Activated CD8-positive, alpha-beta memory T cell treated with anti-CD3 and anti-CD28 coated beads, Interleukin-2, amount 10 ng/mL, durations not matched to agents 7 days and 5 days (primary cell): ENCODE measurements at regions of chr1 and their contacts with region 1.

Region 1: DNA sequence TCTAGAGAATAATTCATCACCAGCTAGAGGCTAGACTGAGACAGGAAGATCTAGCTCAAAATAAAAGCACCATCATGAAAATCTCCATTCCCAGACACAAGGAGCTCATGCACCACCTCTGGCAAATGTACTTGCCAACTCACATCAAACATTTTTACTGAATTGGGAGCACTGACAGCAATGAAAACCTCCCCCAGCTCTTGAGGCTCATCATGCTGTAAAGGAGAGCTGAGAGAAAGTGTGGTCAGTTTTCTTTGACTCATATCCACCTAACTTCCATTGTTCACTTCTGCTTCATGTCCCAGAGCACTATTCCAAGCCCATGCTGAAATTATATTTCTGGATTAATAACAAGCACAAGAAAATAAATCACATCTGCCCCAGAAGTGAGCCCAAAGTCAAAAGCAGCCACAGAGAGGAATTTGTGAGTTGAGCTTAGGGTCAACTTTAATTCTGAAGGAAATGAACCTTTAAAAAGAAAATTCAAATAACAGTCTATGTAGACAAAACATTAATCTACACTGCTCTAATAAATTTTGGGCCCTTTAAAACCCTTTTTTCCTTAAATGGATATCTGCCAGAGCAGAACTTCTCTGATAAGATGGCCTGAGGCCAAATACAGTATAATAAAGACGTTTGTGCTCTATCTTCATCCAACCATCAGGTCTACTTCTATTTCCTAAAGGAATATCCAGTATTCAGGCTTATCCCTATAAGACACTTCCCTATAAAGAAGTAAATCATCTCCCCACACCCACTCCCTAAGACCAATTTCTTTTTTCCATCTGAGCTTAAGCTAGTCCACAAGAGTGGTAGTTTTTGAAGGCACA is 85.9 kb upstream of the ADAM30 start:
- DNase-seq: no peak
- ATAC-seq: no peak
- H3K4me3 Mint-ChIP-seq: no peak overlapping the region
- H3K27ac Mint-ChIP-seq: no peak overlapping the region
- H3K4me1 Mint-ChIP-seq: peaks cover 26% of the 10 kb centered on the region
- H3K27me3 Mint-ChIP-seq: no peaks in the 10 kb centered on the region

Region 2: DNA sequence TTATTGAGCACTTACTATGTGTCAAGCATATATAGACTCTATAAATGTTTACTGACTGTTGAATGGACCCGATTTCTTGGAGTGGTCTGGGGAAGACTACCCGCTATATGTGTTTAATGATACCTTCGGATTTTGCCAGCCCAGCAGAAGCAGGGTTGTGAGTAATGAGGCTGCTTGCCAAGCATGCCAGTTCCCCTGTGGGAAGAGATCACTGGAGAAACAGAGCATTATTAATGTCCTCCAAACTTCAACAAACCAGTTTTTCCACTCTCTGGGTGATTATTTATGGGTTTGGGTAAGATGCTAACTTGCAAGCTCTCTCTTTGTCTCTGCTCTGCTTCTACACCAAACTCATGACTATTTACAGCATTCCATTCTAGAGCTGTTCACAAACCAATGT is 295.6 kb before region 1 on chr1:
- CTCF ChIA-PET with region 1: no interaction called
- DNase-seq: no peak
- ATAC-seq: no peak
- H3K4me3 Mint-ChIP-seq: no peak overlapping the region
- H3K27ac Mint-ChIP-seq: no peak overlapping the region
- H3K4me1 Mint-ChIP-seq: no peaks in the 10 kb centered on the region
- H3K27me3 Mint-ChIP-seq: peaks cover 28% of the 10 kb centered on the region

Region 3: GRCh38 chr1:119968068-119968492 is 14.1 kb before region 1 on chr1:
- CTCF ChIA-PET with region 1: interaction called, 11 read pairs
- DNase-seq: peak; percentile 88
- ATAC-seq: peak; percentile 99
- H3K4me3 Mint-ChIP-seq: no peak overlapping the region
- H3K27ac Mint-ChIP-seq: peak overlapping the region; percentile 19
- H3K4me1 Mint-ChIP-seq: peaks cover 11% of the 10 kb centered on the region
- H3K27me3 Mint-ChIP-seq: no peaks in the 10 kb centered on the region